ENCODE measurements at regions of chr15 and their contacts with region 1.

Region 1: GRCh38 chr15:94206463-94207167 is 24.7 kb upstream of the MCTP2 start:
- DNase-seq: peak; percentile 73
- H3K4me3 ChIP-seq: no peak overlapping the region
- H3K27me3 ChIP-seq: no peaks in the 10 kb centered on the region
- CTCF ChIP-seq: no peak

Region 2: GRCh38 chr15:94352636-94353487 is 146.2 kb after region 1 on chr15:
- CTCF ChIA-PET with region 1: no interaction called
- POLR2A ChIA-PET with region 1: interaction called, 14 read pairs
- DNase-seq: no peak
- H3K4me3 ChIP-seq: no peak overlapping the region
- H3K27me3 ChIP-seq: no peaks in the 10 kb centered on the region
- CTCF ChIP-seq: no peak

Measured in BJ (cell line).